ENCODE measurements at regions of chr7 and their contacts with region 1.

Region 1: GRCh38 chr7:36152756-36153570 is at the start of gene EEPD1:
- DNase-seq: peak; percentile 100
- H3K4me3 ChIP-seq: peak within 1 kb of the TSS; percentile 61 to 77
- H3K27ac ChIP-seq: peak within 1 kb of the TSS; percentile 83 to 84
- H3K4me1 ChIP-seq: peaks cover 8% of the 10 kb centered on the region
- H3K27me3 ChIP-seq: no peaks in the 10 kb centered on the region
- CTCF ChIP-seq: peak in 1 of 4 experiments; percentile 3
- POLR2A ChIP-seq: peak; percentile 96
- total RNA-seq, gene EEPD1: 21.9 to 30.1 TPM

Region 2: GRCh38 chr7:35985126-35985754 is 167.7 kb before region 1 on chr7:
- intact Hi-C with region 1: loop called (anchors 5 kb)
- DNase-seq: peak; percentile 79
- H3K4me3 ChIP-seq: no peak overlapping the region
- H3K27ac ChIP-seq: no peak overlapping the region
- H3K4me1 ChIP-seq: no peaks in the 10 kb centered on the region
- H3K27me3 ChIP-seq: no peaks in the 10 kb centered on the region
- CTCF ChIP-seq: peak; percentile 82 to 97 (median 94)
- POLR2A ChIP-seq: no peak

Region 3: DNA sequence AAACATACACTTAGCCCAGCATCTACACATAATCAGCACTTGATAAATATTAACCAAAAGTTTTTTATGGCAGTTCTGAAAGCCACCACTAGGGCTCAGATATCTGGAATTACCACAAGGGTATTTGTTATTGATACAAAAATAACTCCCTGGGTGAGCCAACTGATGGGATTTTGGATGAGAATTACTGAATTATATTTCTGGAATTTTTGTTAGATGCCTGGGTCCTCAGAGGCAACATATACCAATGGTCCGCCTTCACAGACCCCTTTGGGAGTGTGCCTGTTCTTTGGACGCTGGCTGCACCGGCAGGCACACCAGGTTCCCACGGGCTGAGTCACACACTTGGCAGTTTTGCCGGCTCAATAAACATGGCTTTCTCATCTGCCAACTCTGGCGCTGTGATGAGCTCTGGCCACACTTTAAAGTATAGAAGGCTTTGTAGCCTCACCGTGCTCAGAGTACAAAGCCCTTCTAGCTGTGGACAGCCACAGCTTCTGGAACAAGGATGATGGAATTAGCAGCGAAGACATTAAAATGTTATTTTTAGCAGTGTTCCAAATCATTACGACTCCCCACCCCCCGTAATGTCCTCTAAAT is 24.4 kb before region 1 on chr7:
- intact Hi-C with region 1: loop called (anchors 1 kb)
- DNase-seq: peak; percentile 92
- H3K4me3 ChIP-seq: no peak overlapping the region
- H3K27ac ChIP-seq: peak overlapping the region; percentile 28 to 67
- H3K4me1 ChIP-seq: no peaks in the 10 kb centered on the region
- H3K27me3 ChIP-seq: no peaks in the 10 kb centered on the region
- CTCF ChIP-seq: peak; percentile 37 to 87 (median 82)
- POLR2A ChIP-seq: no peak

Region 4: DNA sequence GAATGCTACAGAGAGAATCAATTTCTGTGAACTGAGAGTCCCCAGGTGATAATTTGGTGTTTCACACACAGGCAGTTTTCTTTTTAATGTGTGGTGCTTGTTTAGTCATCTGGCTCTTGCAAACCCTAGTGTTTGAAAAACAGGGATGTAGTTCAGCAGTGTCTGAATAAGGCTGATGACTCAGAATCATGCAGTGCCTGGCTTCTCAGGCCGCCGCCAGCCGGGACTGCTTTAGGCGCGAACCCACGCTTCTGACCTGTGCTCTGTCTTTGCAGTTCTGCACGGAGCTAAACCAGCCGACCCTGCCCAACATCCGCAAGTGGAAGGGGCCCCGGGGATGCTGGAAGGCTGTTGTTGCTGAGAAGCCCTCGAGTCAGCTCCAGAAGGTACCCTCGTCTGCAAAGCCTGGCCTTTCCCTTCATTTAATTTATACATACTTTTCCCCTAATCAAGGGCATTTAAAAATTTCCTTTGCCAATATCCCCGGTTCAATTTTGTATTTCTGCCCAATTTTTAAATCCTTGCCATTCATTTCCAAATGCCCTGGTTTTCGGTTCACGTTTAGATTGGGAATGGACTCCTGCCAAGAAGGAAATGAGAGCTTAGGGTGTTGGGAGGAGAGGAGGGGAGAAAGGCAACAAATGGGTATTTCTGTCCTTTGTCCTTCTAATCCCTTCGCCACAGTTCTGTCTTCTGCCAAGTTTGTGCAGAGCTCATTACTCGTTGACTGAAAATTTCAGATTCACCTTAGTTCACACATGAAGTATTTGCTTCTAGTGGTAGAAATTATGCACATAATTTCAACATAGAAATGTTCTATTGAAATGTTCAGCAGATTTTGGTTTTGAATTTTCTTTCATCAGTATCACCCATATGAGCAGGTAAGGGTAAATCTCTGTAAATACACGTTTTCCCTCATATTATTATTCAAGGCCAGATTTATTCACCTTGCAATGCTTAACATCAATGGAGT is 128.2 kb after region 1 on chr7:
- intact Hi-C with region 1: loop called (anchors 5 kb)
- DNase-seq: peak; percentile 45
- H3K4me3 ChIP-seq: no peak overlapping the region
- H3K27ac ChIP-seq: peak overlapping the region in 1 of 2 donors; percentile 31
- H3K4me1 ChIP-seq: peaks cover 8% of the 10 kb centered on the region
- H3K27me3 ChIP-seq: no peaks in the 10 kb centered on the region
- CTCF ChIP-seq: peak in 1 of 4 experiments; percentile 14
- POLR2A ChIP-seq: no peak

Region 5: DNA sequence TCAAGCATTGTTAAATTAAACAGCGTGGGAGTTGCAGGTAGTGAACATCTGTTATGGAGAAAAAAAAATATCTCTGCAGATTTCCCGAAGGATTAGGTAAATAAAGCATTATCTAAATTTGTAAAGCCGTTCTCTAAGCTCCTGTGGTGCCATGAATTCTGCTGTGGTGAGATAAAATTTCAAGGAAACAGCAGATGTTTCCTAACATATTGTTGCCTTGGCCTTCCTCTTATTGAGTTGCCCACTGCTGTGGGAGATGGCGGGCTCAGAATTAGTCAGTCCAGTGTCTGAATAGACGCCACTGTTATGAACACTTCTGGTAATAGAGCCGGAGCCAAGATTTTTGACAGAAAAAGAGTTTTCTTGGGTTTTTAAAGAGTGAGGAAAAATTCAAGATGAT is 1378.3 kb after region 1 on chr7:
- intact Hi-C with region 1: no loop called
- DNase-seq: no peak
- H3K4me3 ChIP-seq: no peak overlapping the region
- H3K27ac ChIP-seq: no peak overlapping the region
- H3K4me1 ChIP-seq: peaks cover 6% of the 10 kb centered on the region
- H3K27me3 ChIP-seq: no peaks in the 10 kb centered on the region
- CTCF ChIP-seq: no peak
- POLR2A ChIP-seq: no peak